PC-9 (cell line): ENCODE measurements at regions of chr17 and their contacts with region 1.

Region 1: DNA sequence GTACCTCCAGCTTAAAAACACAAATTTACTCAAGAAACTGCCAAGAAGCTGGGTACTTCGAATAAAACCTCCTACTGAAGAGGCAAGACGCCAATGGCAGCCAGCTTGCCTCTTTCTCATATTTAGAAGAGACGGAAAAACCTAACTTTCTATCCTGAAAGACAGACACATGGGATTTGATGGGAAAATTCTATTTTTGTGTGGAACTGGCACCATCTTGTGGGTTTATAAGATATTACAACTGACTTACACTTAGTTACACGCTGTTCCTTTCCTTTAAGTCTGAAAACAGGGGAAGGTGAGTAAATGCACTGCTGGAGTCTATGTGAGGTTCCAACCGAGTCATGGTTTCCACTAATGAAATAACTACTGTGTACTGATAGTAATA is 10.3 kb downstream of the ZNF18 start:
- DNase-seq: peak; percentile 2 to 37
- H3K4me3 ChIP-seq: no peak overlapping the region
- H3K27ac ChIP-seq: no peak overlapping the region
- H3K4me1 ChIP-seq: no peaks in the 10 kb centered on the region
- H3K27me3 ChIP-seq: no peaks in the 10 kb centered on the region
- CTCF ChIP-seq: peak; percentile 65

Region 2: GRCh38 chr17:10729334-10730193 is 1257.4 kb before region 1 on chr17 and contains the start of gene TMEM220:
- CTCF ChIA-PET with region 1: no interaction called
- POLR2A ChIA-PET with region 1: no interaction called
- intact Hi-C with region 1: loop called (anchors 10 kb)
- DNase-seq: no peak
- H3K4me3 ChIP-seq: no peak within 1 kb of the TSS
- H3K27ac ChIP-seq: no peak within 1 kb of the TSS
- H3K4me1 ChIP-seq: no peaks in the 10 kb centered on the region
- H3K27me3 ChIP-seq: peaks cover 33% of the 10 kb centered on the region
- CTCF ChIP-seq: no peak
- total RNA-seq, gene TMEM220: not detected in 2 replicates

Region 3: DNA sequence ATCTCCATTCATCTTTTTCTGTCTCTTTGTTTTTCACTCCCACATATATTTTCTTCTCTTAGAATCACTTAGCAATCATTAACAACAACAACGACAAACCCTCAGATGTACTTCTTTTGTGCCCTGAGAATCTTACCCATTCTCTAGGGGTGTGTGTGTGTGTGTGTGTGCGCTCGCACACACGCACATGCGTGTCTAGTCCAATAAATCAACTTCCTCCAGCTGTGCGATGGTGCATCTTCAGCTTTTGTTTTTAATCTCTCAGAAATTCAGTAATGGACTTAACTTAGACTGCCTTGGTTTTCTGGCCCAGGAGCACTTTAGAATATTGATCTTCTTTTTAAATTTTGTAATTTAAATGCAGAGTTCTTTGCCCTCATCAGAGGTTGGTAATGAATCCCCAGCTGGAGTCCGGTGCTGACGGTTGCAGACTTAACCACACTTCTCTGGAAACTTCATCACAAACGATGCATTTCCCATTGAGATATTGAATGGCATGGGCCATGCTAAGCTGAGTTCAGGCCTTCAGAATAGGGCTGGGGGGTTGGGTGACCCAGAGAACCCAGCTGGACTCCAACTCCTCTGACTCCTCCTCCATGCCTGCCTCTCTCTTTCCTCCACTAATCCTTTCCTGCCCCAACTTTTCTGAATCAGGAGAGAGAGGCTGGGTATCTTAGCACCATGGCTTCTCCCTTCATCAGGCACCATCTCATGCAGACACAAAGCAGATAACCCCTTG is 183.5 kb before region 1 on chr17:
- CTCF ChIA-PET with region 1: no interaction called
- POLR2A ChIA-PET with region 1: no interaction called
- intact Hi-C with region 1: no loop called
- DNase-seq: no peak
- H3K4me3 ChIP-seq: no peak overlapping the region
- H3K27ac ChIP-seq: no peak overlapping the region
- H3K4me1 ChIP-seq: no peaks in the 10 kb centered on the region
- H3K27me3 ChIP-seq: no peaks in the 10 kb centered on the region; the same call in 1 of the 2 replicates
- CTCF ChIP-seq: no peak